CD4-positive, alpha-beta memory T cell (primary cell): ENCODE measurements at regions of chr1 and their contacts with region 1.

Region 1: DNA sequence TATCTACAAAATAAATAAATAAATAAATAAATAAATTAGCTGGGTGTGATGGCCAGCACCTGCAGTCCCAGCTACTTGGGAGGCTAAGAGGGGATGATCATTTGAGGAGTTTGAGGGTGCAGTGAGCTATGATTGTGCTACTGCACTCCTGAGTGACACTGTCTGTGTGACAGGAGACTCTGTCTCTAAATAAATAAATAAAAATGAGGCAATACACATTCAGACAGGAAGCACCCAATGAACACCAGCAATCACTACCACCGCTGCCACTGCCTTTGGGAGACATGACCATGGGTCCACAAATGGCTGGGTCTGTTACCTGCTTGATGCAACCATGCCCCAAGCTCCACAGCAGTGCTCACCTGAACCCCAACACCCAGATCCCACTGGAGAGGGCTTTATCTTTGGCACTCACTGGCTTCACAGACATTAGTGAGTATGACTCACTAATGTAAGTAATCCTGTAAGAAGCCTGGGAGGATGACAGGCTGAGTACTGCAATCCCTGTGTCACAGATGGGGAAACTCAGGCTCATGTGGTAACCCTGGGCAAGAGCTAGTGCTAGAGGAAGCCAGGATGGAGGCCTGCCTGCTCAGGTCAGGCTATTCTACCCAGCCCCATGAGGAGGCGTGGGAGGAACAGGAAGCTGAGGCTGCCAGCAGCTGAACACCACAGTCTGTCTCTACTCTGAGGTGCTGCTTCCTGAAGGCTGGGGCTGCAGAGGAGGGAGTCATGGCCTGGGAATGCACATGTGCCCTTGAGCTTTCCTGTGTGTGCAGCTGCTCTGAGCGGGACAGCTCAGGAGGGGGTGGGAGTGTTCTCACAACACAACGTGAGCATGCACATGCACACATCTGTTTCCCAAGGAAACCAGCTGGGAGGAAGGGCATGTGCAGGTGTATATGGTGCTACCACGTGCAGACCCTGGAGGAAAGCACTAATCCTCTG is 43.0 kb downstream of the SLC9A1 start:
- DNase-seq: peak; percentile 64 to 80 (median 69)
- H3K4me3 ChIP-seq: no peak overlapping the region
- H3K4me3 Mint-ChIP-seq: peak overlapping the region; percentile 21 to 83 (median 62)
- H3K27ac ChIP-seq: peak overlapping the region; percentile 48
- H3K27ac Mint-ChIP-seq: peak overlapping the region; percentile 74 to 90 (median 87)
- H3K4me1 ChIP-seq: peaks cover 31% of the 10 kb centered on the region
- H3K4me1 Mint-ChIP-seq: peaks cover 34 to 67% (median 51%) of the 10 kb centered on the region in 4 donors
- H3K27me3 ChIP-seq: no peaks in the 10 kb centered on the region
- H3K27me3 Mint-ChIP-seq: no peaks in the 10 kb centered on the region

Region 2: DNA sequence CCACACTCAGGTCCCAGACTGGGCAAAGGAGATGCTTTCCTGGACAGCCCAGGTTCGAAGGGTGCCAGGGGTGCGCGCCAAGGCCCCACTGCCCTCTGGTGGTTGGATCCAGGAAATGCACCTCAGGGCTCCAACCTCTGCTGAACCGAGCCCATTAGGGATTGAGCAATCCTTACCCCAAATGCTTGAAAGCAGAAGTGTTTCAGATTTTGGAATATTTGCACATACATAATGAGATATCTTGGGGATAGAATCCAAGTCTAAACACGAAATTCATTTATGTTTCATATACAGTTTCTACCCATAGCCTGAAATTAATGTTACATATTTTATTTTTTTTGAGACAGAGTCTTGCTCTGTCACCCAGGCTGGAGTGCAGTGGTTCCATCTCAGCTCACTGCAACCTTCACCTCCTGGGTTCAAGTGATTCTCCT is 14.4 kb before region 1 on chr1:
- CTCF ChIA-PET with region 1: interaction called, 85 read pairs
- POLR2A ChIA-PET with region 1: interaction called, 10 read pairs
- intact Hi-C with region 1: no loop called
- DNase-seq: peak; percentile 64 to 72 (median 68)
- H3K4me3 ChIP-seq: no peak overlapping the region
- H3K4me3 Mint-ChIP-seq: no peak overlapping the region
- H3K27ac ChIP-seq: no peak overlapping the region
- H3K27ac Mint-ChIP-seq: peak overlapping the region in 1 of 7 donors; percentile 40
- H3K4me1 ChIP-seq: no peaks in the 10 kb centered on the region
- H3K4me1 Mint-ChIP-seq: peaks cover 0 to 4% (median 3%) of the 10 kb centered on the region in 4 donors
- H3K27me3 ChIP-seq: no peaks in the 10 kb centered on the region
- H3K27me3 Mint-ChIP-seq: no peaks in the 10 kb centered on the region

Region 3: GRCh38 chr1:27136998-27137542 is 25.2 kb after region 1 on chr1:
- CTCF ChIA-PET with region 1: interaction called, 21 read pairs
- POLR2A ChIA-PET with region 1: interaction called, 21 read pairs
- intact Hi-C with region 1: loop called (anchors 2 kb)
- DNase-seq: peak; percentile 74 to 85 (median 78)
- H3K4me3 ChIP-seq: peak overlapping the region; percentile 57 to 59
- H3K4me3 Mint-ChIP-seq: peak overlapping the region; percentile 83 to 94 (median 90)
- H3K27ac ChIP-seq: peak overlapping the region; percentile 67
- H3K27ac Mint-ChIP-seq: peak overlapping the region; percentile 98 to 100 (median 100)
- H3K4me1 ChIP-seq: peaks cover 35% of the 10 kb centered on the region
- H3K4me1 Mint-ChIP-seq: peaks cover 25 to 52% (median 44%) of the 10 kb centered on the region in 4 donors
- H3K27me3 ChIP-seq: no peaks in the 10 kb centered on the region
- H3K27me3 Mint-ChIP-seq: no peaks in the 10 kb centered on the region

Region 4: DNA sequence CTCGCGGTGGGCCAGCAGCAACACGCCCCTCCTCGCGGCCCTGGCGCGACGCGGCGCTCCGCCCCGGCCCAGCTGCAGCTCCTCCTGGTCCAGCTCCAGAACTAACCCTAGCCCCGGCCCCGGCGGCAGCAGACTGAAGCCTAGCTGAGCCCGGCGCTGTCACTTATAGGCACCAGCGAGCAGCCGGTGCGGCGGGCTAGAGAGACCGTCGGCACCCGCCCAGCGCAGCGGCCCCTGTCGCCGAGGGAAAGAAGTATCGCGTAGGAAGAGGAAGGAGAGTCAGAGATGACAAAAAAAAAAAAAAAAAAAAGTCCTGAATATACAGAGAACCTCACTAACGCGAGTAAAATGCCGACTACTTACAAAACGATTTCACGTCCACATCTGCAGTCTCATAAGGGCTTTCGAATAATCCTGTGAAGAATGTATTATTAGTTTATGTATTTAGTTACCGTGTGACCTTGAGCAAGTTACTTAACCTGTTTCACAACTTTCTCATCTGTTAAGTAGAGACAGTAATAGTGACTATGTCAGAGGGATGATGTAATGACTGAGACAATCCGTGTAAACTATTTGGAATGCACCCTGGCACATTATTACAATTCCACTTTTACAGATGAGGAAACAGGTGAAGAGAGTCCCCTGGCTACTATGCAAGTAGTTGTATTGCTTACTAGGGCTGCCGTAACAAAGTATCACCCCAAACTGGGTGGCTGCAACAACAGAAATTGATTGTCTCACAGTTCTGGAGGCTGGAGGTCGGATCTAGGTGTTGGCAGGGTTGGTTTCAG is 43.3 kb after region 1 on chr1 and contains the start of gene SLC9A1:
- CTCF ChIA-PET with region 1: interaction called, 74 read pairs
- POLR2A ChIA-PET with region 1: interaction called, 62 read pairs
- intact Hi-C with region 1: loop called (anchors 1 kb)
- DNase-seq: peak; percentile 93 to 95 (median 93)
- H3K4me3 ChIP-seq: peak within 1 kb of the TSS; percentile 38 to 42
- H3K4me3 Mint-ChIP-seq: peak within 1 kb of the TSS; percentile 82 to 95 (median 92)
- H3K27ac ChIP-seq: peak within 1 kb of the TSS; percentile 90
- H3K27ac Mint-ChIP-seq: peak within 1 kb of the TSS; percentile 97 to 100 (median 99)
- H3K4me1 ChIP-seq: peaks cover 46% of the 10 kb centered on the region
- H3K4me1 Mint-ChIP-seq: peaks cover 36 to 49% (median 43%) of the 10 kb centered on the region in 4 donors
- H3K27me3 ChIP-seq: no peaks in the 10 kb centered on the region
- H3K27me3 Mint-ChIP-seq: no peaks in the 10 kb centered on the region
- total RNA-seq, gene SLC9A1: 11.4 to 13.2 TPM

Region 5: GRCh38 chr1:27163103-27163502 is 51.2 kb after region 1 on chr1:
- CTCF ChIA-PET with region 1: interaction called, 74 read pairs
- POLR2A ChIA-PET with region 1: interaction called, 4 read pairs
- intact Hi-C with region 1: no loop called
- DNase-seq: no peak
- H3K4me3 ChIP-seq: no peak overlapping the region
- H3K4me3 Mint-ChIP-seq: no peak overlapping the region
- H3K27ac ChIP-seq: no peak overlapping the region
- H3K27ac Mint-ChIP-seq: no peak overlapping the region
- H3K4me1 ChIP-seq: peaks cover 9% of the 10 kb centered on the region
- H3K4me1 Mint-ChIP-seq: peaks cover 6 to 11% (median 10%) of the 10 kb centered on the region in 4 donors
- H3K27me3 ChIP-seq: no peaks in the 10 kb centered on the region
- H3K27me3 Mint-ChIP-seq: no peaks in the 10 kb centered on the region

Region 6: GRCh38 chr1:27192039-27192529 is 80.2 kb after region 1 on chr1:
- CTCF ChIA-PET with region 1: interaction called, 44 read pairs
- POLR2A ChIA-PET with region 1: no interaction called
- intact Hi-C with region 1: no loop called
- DNase-seq: no peak
- H3K4me3 ChIP-seq: no peak overlapping the region
- H3K4me3 Mint-ChIP-seq: no peak overlapping the region
- H3K27ac ChIP-seq: no peak overlapping the region
- H3K27ac Mint-ChIP-seq: no peak overlapping the region
- H3K4me1 ChIP-seq: no peaks in the 10 kb centered on the region
- H3K4me1 Mint-ChIP-seq: no peaks in the 10 kb centered on the region
- H3K27me3 ChIP-seq: no peaks in the 10 kb centered on the region
- H3K27me3 Mint-ChIP-seq: peaks cover 0 to 2% of the 10 kb centered on the region in 2 donors

Region 7: DNA sequence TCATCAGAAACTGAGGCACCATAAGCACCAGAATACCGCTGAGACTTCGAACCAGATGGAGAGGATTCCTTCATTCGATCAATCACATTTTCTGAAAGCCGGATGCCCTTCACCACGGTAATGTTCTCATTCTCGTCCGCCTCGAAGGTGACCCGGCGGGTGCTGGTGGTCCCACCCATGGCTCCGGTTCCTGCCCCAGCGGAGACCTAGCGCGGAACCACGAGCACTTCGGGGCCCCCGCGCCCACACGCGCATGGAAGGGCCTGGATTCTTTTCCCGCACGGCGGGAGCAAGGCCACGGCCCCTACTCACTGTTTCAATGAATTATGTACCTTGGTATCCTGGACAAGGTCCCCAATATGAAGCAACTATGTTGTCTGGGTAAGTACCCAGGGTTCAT is 89.4 kb after region 1 on chr1:
- CTCF ChIA-PET with region 1: interaction called, 44 read pairs
- POLR2A ChIA-PET with region 1: interaction called, 6 read pairs
- intact Hi-C with region 1: loop called (anchors 1 kb)
- DNase-seq: no peak
- H3K4me3 ChIP-seq: no peak overlapping the region
- H3K4me3 Mint-ChIP-seq: no peak overlapping the region
- H3K27ac ChIP-seq: no peak overlapping the region
- H3K27ac Mint-ChIP-seq: no peak overlapping the region
- H3K4me1 ChIP-seq: peaks cover 6% of the 10 kb centered on the region
- H3K4me1 Mint-ChIP-seq: peaks cover 4 to 6% (median 5%) of the 10 kb centered on the region in 4 donors
- H3K27me3 ChIP-seq: no peaks in the 10 kb centered on the region
- H3K27me3 Mint-ChIP-seq: peaks cover 1 to 5% of the 10 kb centered on the region in 2 donors